Sigmoid colon (tissue), 7 donors: ENCODE measurements at regions of chrX and their contacts with region 1.

Region 1: GRCh38 chrX:53433651-53434639 is at the start of gene HSD17B10:
- DNase-seq: peak; percentile 95
- H3K4me3 ChIP-seq: peak within 1 kb of the TSS; percentile 46 to 62 (median 55)
- H3K27ac ChIP-seq: peak within 1 kb of the TSS; percentile 66 to 80 (median 76)
- H3K4me1 ChIP-seq: peaks cover 0 to 13% (median 3%) of the 10 kb centered on the region in 4 donors
- H3K27me3 ChIP-seq: no peaks in the 10 kb centered on the region
- CTCF ChIP-seq: no peak
- EP300 ChIP-seq: no peak
- POLR2A ChIP-seq: peak in 1 of 2 donors; percentile 46
- total RNA-seq, gene HSD17B10: 44.6 to 67.4 (median 63.4) TPM

Region 2: DNA sequence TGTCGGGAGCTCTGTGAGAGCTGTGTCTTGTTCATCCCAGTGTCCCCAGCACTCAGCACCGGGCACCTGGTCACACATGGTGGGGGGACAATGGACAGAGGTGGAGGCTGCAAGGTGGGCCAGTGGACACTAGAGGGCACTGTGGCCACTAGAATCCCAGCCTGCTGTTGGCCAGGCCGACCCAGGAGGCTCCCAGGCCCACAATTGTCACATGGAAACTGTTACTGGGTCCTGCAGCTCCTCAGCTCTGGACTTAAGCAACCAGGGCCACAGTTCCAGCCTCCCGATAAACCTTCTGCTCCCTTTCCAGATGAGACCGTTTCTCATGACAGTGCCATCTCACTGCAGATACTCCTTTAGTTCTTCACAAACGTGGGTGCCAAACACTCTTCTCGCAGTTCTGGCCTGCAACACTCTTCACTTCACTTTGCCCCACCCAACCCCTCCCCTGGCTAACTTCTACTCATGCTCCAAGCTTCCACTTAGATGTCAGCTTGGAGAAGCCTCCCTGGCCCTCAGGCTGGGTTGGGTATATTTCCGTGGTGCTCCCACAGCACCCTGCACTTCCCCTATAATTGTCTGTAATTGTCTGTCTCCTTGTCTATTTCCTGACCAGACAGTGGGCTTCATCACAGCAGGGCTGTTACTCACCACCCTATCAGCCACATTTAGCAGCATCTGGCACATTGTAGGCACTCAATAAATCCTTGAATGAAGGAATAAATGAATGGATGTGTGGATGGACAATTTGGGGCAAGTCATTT is 149.1 kb before region 1 on chrX:
- intact Hi-C with region 1: loop called (anchors 10 kb)
- DNase-seq: peak; percentile 83
- H3K4me3 ChIP-seq: no peak overlapping the region
- H3K27ac ChIP-seq: peak overlapping the region in 3 of 4 donors; percentile 47 to 77 (median 70)
- H3K4me1 ChIP-seq: peaks cover 0 to 69% (median 51%) of the 10 kb centered on the region in 4 donors
- H3K27me3 ChIP-seq: no peaks in the 10 kb centered on the region
- CTCF ChIP-seq: peak; percentile 54 to 70 (median 66)
- EP300 ChIP-seq: no peak
- POLR2A ChIP-seq: no peak

Region 3: GRCh38 chrX:53678667-53679066 is 244.7 kb after region 1 on chrX:
- intact Hi-C with region 1: loop called (anchors 10 kb)
- DNase-seq: no peak
- H3K4me3 ChIP-seq: no peak overlapping the region
- H3K27ac ChIP-seq: no peak overlapping the region
- H3K4me1 ChIP-seq: peaks cover 0 to 17% (median 4%) of the 10 kb centered on the region in 4 donors
- H3K27me3 ChIP-seq: no peaks in the 10 kb centered on the region
- CTCF ChIP-seq: no peak
- EP300 ChIP-seq: no peak
- POLR2A ChIP-seq: no peak